HepG2 (cell line): ENCODE measurements at regions of chr2 and their contacts with region 1.

Region 1: GRCh38 chr2:85772019-85772745 is 18.4 kb downstream of the ATOH8 start:
- DNase-seq: peak; percentile 97
- ATAC-seq: peak; percentile 84
- H3K4me3 ChIP-seq: peak overlapping the region; percentile 36 to 67 (median 43); a peak in 5 of 6 replicates
- H3K27ac ChIP-seq: no peak overlapping the region
- H3K4me1 ChIP-seq: peaks cover 60% of the 10 kb centered on the region
- H3K27me3 ChIP-seq: no peaks in the 10 kb centered on the region
- CTCF ChIP-seq: peak; percentile 55
- EP300 ChIP-seq: peak; percentile 27 to 41; a peak in 1 of 4 replicates
- POLR2A ChIP-seq: no peak
- RAD21 ChIP-seq: peak; percentile 58; the same call in 1 of the 2 replicates

Region 2: DNA sequence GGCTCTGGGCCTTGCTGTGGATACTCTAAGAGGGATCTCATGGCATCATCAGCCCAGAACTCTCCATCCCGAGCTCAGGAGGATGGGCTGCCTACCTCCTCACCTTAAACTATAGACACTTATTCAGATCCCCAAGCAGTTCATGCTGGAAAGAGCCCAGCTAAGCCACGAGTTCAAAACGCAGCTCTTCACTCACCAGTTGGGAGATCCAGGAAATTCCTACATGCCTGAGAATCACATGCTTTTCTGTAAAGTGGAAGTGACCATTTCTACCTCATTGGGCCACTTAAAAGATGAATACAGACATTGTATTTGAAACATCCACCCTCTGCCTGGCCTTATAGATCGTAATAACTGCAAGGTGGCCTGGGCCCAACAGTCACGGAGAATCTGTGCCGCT is 11.8 kb before region 1 on chr2:
- CTCF ChIA-PET with region 1: no interaction called
- POLR2A ChIA-PET with region 1: interaction called, 11 read pairs
- in situ Hi-C with region 1: no loop called
- intact Hi-C with region 1: no loop called
- DNase-seq: no peak
- ATAC-seq: no peak
- H3K4me3 ChIP-seq: no peak overlapping the region
- H3K27ac ChIP-seq: no peak overlapping the region
- H3K4me1 ChIP-seq: peaks cover 79% of the 10 kb centered on the region
- H3K27me3 ChIP-seq: peaks cover 0 to 10% of the 10 kb centered on the region in 2 experiments; a peak in 3 of 5 replicates
- CTCF ChIP-seq: no peak
- EP300 ChIP-seq: no peak
- POLR2A ChIP-seq: no peak
- RAD21 ChIP-seq: no peak

Region 3: GRCh38 chr2:85797921-85798320 is 25.7 kb after region 1 on chr2:
- CTCF ChIA-PET with region 1: no interaction called
- POLR2A ChIA-PET with region 1: interaction called, 10 read pairs
- in situ Hi-C with region 1: no loop called
- intact Hi-C with region 1: loop called (anchors 2 kb)
- DNase-seq: peak; percentile 77
- ATAC-seq: peak; percentile 43; the same call in 2 of the 3 replicates
- H3K4me3 ChIP-seq: no peak overlapping the region
- H3K27ac ChIP-seq: no peak overlapping the region
- H3K4me1 ChIP-seq: peaks cover 56% of the 10 kb centered on the region
- H3K27me3 ChIP-seq: no peaks in the 10 kb centered on the region; a peak in 1 of 5 replicates
- CTCF ChIP-seq: peak; percentile 64
- EP300 ChIP-seq: no peak
- POLR2A ChIP-seq: no peak
- RAD21 ChIP-seq: peak; percentile 62; the same call in 1 of the 2 replicates

Region 4: DNA sequence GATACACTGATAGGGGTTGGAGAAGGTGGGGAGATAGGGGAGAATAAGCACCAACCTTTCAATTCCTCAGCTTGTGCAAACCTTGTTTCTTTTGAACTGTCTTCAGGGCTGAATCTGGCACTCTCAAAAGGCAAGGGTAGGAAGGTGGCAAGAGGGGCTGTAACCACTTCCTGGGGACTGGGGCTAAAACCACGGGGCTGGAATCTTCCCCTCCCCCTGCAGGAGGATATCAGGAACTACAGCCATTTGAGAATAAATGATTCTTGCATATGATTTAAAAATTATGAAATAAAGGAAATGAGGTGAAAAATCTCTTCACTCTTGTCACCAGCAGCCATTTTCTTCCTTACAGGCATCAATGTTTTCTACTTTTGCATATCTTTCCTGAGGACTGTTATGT is 32.4 kb after region 1 on chr2:
- CTCF ChIA-PET with region 1: no interaction called
- POLR2A ChIA-PET with region 1: interaction called, 10 read pairs
- in situ Hi-C with region 1: no loop called
- intact Hi-C with region 1: loop called (anchors 1 kb)
- DNase-seq: no peak
- ATAC-seq: no peak
- H3K4me3 ChIP-seq: no peak overlapping the region
- H3K27ac ChIP-seq: no peak overlapping the region
- H3K4me1 ChIP-seq: peaks cover 38% of the 10 kb centered on the region
- H3K27me3 ChIP-seq: no peaks in the 10 kb centered on the region
- CTCF ChIP-seq: peak; percentile 45
- EP300 ChIP-seq: no peak
- POLR2A ChIP-seq: no peak
- RAD21 ChIP-seq: no peak

Region 5: GRCh38 chr2:85838181-85838580 is 66.0 kb after region 1 on chr2:
- CTCF ChIA-PET with region 1: no interaction called
- POLR2A ChIA-PET with region 1: no interaction called
- in situ Hi-C with region 1: no loop called
- intact Hi-C with region 1: no loop called
- DNase-seq: no peak
- ATAC-seq: no peak
- H3K4me3 ChIP-seq: no peak overlapping the region
- H3K27ac ChIP-seq: no peak overlapping the region
- H3K4me1 ChIP-seq: no peaks in the 10 kb centered on the region
- H3K27me3 ChIP-seq: no peaks in the 10 kb centered on the region
- CTCF ChIP-seq: peak; percentile 39
- EP300 ChIP-seq: no peak
- POLR2A ChIP-seq: no peak
- RAD21 ChIP-seq: no peak